ENCODE measurements at regions of chr6 and their contacts with region 1.

Region 1: DNA sequence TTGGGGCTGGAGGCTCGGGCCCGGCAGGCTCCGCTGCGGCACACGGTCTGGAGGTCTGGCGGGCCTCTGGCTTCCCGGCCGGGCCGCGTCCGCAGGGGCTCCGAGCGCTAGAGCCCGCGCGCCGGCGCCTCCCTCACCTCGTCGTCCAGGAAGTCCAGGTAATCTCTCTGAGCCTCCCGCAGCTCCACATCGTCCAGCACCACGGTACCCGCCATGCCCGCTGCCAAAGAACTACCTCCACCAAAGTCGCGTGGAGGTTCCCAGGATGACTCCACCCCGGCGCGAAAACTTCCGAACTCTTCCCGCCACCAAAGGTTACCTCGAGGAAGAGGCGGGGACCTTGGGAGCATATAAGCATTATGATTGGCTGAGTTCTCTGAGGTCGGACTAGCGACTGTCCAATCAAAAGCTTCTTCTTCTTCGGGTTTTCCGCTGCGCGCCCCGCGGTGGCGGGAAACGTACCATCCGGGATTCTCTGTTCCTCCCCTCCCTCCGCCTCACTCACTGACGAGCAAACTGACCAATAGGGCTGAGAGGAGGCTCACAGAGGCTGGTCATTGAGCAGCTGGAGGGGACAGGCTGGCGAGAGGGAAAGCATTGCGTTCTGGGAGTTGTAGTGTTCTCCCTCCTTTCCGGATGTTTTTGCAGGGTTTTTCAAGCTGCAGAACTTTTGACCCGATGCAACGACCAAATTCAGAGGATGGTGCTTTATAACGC is at the start of gene MCM3:
- DNase-seq: peak; percentile 97
- ATAC-seq: peak; percentile 100
- H3K4me3 ChIP-seq: peak within 1 kb of the TSS; percentile 76
- H3K27ac ChIP-seq: peak within 1 kb of the TSS; percentile 59
- H3K4me1 ChIP-seq: peaks cover 7% of the 10 kb centered on the region
- H3K27me3 ChIP-seq: no peaks in the 10 kb centered on the region
- CTCF ChIP-seq: no peak
- total RNA-seq, gene MCM3: 7.6 to 17.3 (median 11.1) TPM

Region 2: GRCh38 chr6:52210227-52210626 is 74.4 kb before region 1 on chr6:
- intact Hi-C with region 1: no loop called
- DNase-seq: no peak
- ATAC-seq: no peak
- H3K4me3 ChIP-seq: no peak overlapping the region
- H3K27ac ChIP-seq: no peak overlapping the region
- H3K4me1 ChIP-seq: no peaks in the 10 kb centered on the region
- H3K27me3 ChIP-seq: peaks cover 0 to 2% (median 0%) of the 10 kb centered on the region in 3 donors
- CTCF ChIP-seq: no peak

Region 3: DNA sequence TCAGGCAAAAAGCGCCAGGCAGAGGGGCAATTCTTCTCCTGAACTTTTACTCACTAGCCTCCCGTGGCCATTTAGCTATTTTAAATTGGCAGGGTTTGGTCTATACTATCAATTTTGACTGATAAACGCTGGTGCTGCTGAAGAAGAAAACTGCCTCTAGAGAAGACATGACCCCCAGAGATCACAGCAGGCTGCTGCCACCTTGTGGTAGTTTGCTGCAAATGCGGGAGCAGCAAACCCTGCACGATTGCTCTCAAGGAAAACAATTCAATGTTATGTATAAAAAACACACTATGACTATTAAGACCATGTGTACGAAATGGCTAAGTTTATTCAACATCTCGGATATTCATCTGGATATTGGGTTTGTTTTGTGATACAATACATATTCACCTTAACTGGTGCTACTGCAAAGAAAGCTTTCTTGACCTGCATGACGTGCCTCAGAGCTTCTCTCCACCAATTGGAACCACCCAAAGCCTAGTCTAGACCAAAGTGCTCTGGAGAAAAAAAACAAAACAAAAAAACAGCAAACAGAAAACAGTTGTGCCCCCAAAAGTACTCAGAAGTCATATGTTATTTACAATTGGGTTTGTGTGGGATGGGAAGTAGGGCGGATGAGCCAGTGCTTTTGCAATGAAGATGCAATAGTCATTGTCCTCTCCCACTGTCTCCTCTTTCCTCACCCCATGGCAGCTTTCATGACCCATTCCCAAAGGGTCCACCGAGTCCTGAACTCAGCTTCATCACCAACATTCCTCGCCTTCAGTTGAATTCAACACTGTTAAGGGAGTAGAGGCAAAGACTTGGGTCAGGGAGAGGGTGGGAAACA is 20.7 kb before region 1 on chr6:
- intact Hi-C with region 1: no loop called
- DNase-seq: peak; percentile 39 to 64
- ATAC-seq: peak; percentile 73 to 89 (median 80)
- H3K4me3 ChIP-seq: no peak overlapping the region
- H3K27ac ChIP-seq: no peak overlapping the region
- H3K4me1 ChIP-seq: no peaks in the 10 kb centered on the region
- H3K27me3 ChIP-seq: no peaks in the 10 kb centered on the region
- CTCF ChIP-seq: peak; percentile 95

Region 4: GRCh38 chr6:52399511-52400312 is 115.1 kb after region 1 on chr6:
- intact Hi-C with region 1: loop called in 1 of 2 experiments (anchors 5 kb)
- DNase-seq: no peak
- ATAC-seq: no peak
- H3K4me3 ChIP-seq: no peak overlapping the region
- H3K27ac ChIP-seq: no peak overlapping the region
- H3K4me1 ChIP-seq: no peaks in the 10 kb centered on the region
- H3K27me3 ChIP-seq: no peaks in the 10 kb centered on the region
- CTCF ChIP-seq: peak; percentile 63

Region 5: DNA sequence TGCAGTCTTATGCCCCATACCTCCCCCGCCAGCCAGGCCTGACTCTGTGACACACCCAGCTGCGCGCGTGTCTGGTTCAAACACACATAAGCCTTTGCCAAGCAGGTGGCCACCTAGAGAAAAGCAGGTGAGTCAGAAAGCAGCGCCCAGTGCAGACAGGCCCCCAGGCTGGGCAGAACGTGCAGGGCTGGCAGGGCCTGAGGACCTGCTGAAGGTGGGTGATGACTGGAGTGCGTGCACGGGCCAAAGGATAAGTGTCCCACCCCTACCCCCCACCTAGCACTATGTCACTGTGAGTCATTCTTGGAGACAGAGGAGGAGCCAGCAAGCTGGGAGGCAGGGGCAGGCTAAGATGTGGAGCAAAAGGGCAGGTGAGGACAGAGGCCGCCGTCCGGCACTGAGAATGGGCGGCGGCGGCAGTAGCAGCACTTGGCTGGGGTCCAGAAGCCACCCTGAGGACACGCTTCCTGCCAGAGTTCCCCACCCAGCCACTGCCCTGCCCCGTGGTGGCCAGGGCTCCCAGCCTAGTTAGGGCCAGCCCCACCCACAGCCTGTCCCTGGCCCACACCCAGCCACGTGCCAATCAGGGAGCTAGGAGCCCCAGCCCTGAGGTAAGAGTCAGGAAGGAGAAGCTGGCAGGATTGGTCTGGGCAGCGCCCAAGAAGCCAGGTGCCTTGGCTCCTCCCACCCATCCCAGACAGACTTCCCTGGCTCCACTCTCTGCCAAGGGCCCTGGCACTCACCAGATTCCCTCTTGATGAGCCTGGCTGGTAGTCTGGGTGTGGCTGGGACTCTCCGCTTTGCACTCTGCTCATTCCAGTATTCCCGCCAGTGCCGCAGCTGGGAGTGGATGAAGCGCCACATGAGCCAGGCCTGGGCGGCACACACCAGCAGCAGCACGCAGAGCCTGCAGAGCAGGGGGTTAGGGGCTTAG is 219.5 kb after region 1 on chr6:
- intact Hi-C with region 1: loop called in 1 of 2 experiments (anchors 10 kb)
- DNase-seq: peak; percentile 92 to 97
- ATAC-seq: peak; percentile 88 to 93 (median 91)
- H3K4me3 ChIP-seq: no peak overlapping the region
- H3K27ac ChIP-seq: peak overlapping the region; percentile 81
- H3K4me1 ChIP-seq: peaks cover 49% of the 10 kb centered on the region
- H3K27me3 ChIP-seq: no peaks in the 10 kb centered on the region
- CTCF ChIP-seq: no peak

Region 6: GRCh38 chr6:52577022-52577777 is 292.6 kb after region 1 on chr6 and contains the start of gene TRAM2:
- intact Hi-C with region 1: loop called in 1 of 2 experiments (anchors 10 kb)
- DNase-seq: peak; percentile 92
- ATAC-seq: peak; percentile 92 to 95 (median 94)
- H3K4me3 ChIP-seq: peak within 1 kb of the TSS; percentile 98
- H3K27ac ChIP-seq: peak within 1 kb of the TSS; percentile 98
- H3K4me1 ChIP-seq: peaks cover 19% of the 10 kb centered on the region
- H3K27me3 ChIP-seq: no peaks in the 10 kb centered on the region
- CTCF ChIP-seq: peak; percentile 26
- total RNA-seq, gene TRAM2: 3.4 to 5.7 (median 4.5) TPM

Region 7: GRCh38 chr6:52598123-52598823 is 313.7 kb after region 1 on chr6:
- intact Hi-C with region 1: loop called in 1 of 2 experiments (anchors 10 kb)
- DNase-seq: peak; percentile 62 to 75
- ATAC-seq: peak; percentile 77 to 92 (median 82)
- H3K4me3 ChIP-seq: peak overlapping the region; percentile 51
- H3K27ac ChIP-seq: no peak overlapping the region
- H3K4me1 ChIP-seq: peaks cover 9% of the 10 kb centered on the region
- H3K27me3 ChIP-seq: no peaks in the 10 kb centered on the region
- CTCF ChIP-seq: peak; percentile 66

Region 8: GRCh38 chr6:52664186-52664990 is 379.8 kb after region 1 on chr6:
- intact Hi-C with region 1: loop called in 1 of 2 experiments (anchors 5 kb)
- DNase-seq: peak; percentile 79 to 87
- ATAC-seq: peak; percentile 89 to 99 (median 98)
- H3K4me3 ChIP-seq: peak overlapping the region; percentile 84
- H3K27ac ChIP-seq: peak overlapping the region; percentile 53
- H3K4me1 ChIP-seq: no peaks in the 10 kb centered on the region
- H3K27me3 ChIP-seq: peaks cover 0 to 5% (median 0%) of the 10 kb centered on the region in 3 donors
- CTCF ChIP-seq: no peak

Region 9: GRCh38 chr6:52670502-52671409 is 386.1 kb after region 1 on chr6 and contains the start of gene TMEM14A:
- intact Hi-C with region 1: loop called (anchors 5 kb)
- DNase-seq: peak; percentile 94 to 96
- ATAC-seq: peak; percentile 93 to 100 (median 98)
- H3K4me3 ChIP-seq: peak within 1 kb of the TSS; percentile 71
- H3K27ac ChIP-seq: no peak within 1 kb of the TSS
- H3K4me1 ChIP-seq: peaks cover 8% of the 10 kb centered on the region
- H3K27me3 ChIP-seq: no peaks in the 10 kb centered on the region
- CTCF ChIP-seq: no peak
- total RNA-seq, gene TMEM14A: 1.2 to 3.4 (median 1.5) TPM

Region 10: DNA sequence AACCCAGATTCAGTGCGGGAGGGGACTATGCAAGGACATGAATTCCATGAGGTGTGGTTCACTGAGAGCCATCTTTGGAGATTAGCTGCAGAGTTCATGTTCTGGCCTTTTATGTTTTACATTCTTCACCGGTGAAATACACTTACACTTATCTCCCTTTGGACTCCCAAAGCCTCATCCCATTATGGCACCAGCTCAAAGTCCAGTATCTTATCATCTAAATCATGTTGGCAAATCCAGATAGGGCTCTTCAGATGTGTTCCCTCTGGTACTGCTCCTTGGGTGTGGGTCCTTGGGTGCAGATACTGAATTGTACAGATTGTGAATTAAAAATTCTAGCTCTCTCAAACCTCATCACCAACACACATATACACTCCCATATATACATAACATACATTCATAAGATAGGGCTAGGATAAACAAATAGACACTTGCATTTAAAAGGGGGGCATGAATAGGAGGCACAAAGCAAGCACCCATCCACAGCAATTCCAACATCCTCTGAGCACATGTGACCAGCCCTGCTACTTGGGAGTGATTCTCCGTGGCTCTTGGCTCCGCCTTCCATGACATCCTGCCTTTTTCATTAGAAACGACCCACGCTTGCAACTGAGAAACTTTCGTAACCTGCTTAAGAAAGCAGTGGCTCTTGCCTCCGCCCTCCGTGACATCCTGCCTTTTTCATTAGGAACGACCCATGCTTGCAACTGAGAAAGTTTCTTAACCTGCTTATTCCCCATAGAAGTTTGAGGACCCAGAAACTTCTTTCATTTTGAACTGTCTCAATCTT is 1456.6 kb after region 1 on chr6:
- intact Hi-C with region 1: no loop called
- DNase-seq: no peak
- ATAC-seq: no peak
- H3K4me3 ChIP-seq: no peak overlapping the region
- H3K27ac ChIP-seq: no peak overlapping the region
- H3K4me1 ChIP-seq: no peaks in the 10 kb centered on the region
- H3K27me3 ChIP-seq: peaks cover 0 to 2% (median 1%) of the 10 kb centered on the region in 3 donors
- CTCF ChIP-seq: no peak

Measured in psoas muscle (tissue), 8 donors.